ENCODE measurements at regions of chr7 and their contacts with region 1.

Region 1: GRCh38 chr7:111029574-111030251 is 61.2 kb upstream of the LRRN3 start:
- DNase-seq: peak in 7 of 9 donors; percentile 34 to 68 (median 57)
- ATAC-seq: no peak
- H3K4me3 ChIP-seq: no peak overlapping the region
- H3K4me3 Mint-ChIP-seq: peak overlapping the region in 9 of 10 donors; percentile 42 to 81 (median 63)
- H3K27ac ChIP-seq: peak overlapping the region; percentile 33
- H3K27ac Mint-ChIP-seq: peak overlapping the region; percentile 77 to 98 (median 89)
- H3K4me1 ChIP-seq: peaks cover 15 to 47% of the 10 kb centered on the region in 2 donors
- H3K4me1 Mint-ChIP-seq: peaks cover 31 to 69% (median 63%) of the 10 kb centered on the region in 7 donors
- H3K27me3 ChIP-seq: no peaks in the 10 kb centered on the region
- H3K27me3 Mint-ChIP-seq: peaks cover 0 to 2% (median 0%) of the 10 kb centered on the region in 5 donors

Region 2: GRCh38 chr7:110977127-110977737 is 52.5 kb before region 1 on chr7:
- CTCF ChIA-PET with region 1: no interaction called
- POLR2A ChIA-PET with region 1: interaction called, 3 read pairs
- intact Hi-C with region 1: loop called in 1 of 2 experiments (anchors 1 kb)
- DNase-seq: peak in 6 of 9 donors; percentile 17 to 53 (median 43)
- ATAC-seq: peak; percentile 57
- H3K4me3 ChIP-seq: no peak overlapping the region
- H3K4me3 Mint-ChIP-seq: peak overlapping the region; percentile 18 to 83 (median 71)
- H3K27ac ChIP-seq: peak overlapping the region; percentile 51
- H3K27ac Mint-ChIP-seq: peak overlapping the region; percentile 63 to 95 (median 82)
- H3K4me1 ChIP-seq: peaks cover 10 to 20% of the 10 kb centered on the region in 2 donors
- H3K4me1 Mint-ChIP-seq: peaks cover 10 to 76% (median 54%) of the 10 kb centered on the region in 7 donors
- H3K27me3 ChIP-seq: no peaks in the 10 kb centered on the region
- H3K27me3 Mint-ChIP-seq: no peaks in the 10 kb centered on the region

Region 3: GRCh38 chr7:111012799-111013675 is 16.7 kb before region 1 on chr7:
- CTCF ChIA-PET with region 1: interaction called, 7 read pairs
- POLR2A ChIA-PET with region 1: interaction called, 42 read pairs
- intact Hi-C with region 1: loop called (anchors 1 kb)
- DNase-seq: peak in 8 of 9 donors; percentile 44 to 76 (median 70)
- ATAC-seq: peak; percentile 86
- H3K4me3 ChIP-seq: peak overlapping the region; percentile 50
- H3K4me3 Mint-ChIP-seq: peak overlapping the region in 9 of 10 donors; percentile 59 to 83 (median 76)
- H3K27ac ChIP-seq: peak overlapping the region; percentile 82
- H3K27ac Mint-ChIP-seq: peak overlapping the region in 6 of 9 donors; percentile 84 to 96 (median 90)
- H3K4me1 ChIP-seq: peaks cover 13 to 77% of the 10 kb centered on the region in 2 donors
- H3K4me1 Mint-ChIP-seq: peaks cover 38 to 76% (median 48%) of the 10 kb centered on the region in 7 donors
- H3K27me3 ChIP-seq: no peaks in the 10 kb centered on the region
- H3K27me3 Mint-ChIP-seq: no peaks in the 10 kb centered on the region

Region 4: GRCh38 chr7:111043533-111043932 is 13.8 kb after region 1 on chr7:
- CTCF ChIA-PET with region 1: interaction called, 4 read pairs
- POLR2A ChIA-PET with region 1: interaction called, 11 read pairs
- intact Hi-C with region 1: loop called (anchors 1 to 2 kb)
- DNase-seq: no peak
- ATAC-seq: no peak
- H3K4me3 ChIP-seq: no peak overlapping the region
- H3K4me3 Mint-ChIP-seq: no peak overlapping the region
- H3K27ac ChIP-seq: no peak overlapping the region
- H3K27ac Mint-ChIP-seq: no peak overlapping the region
- H3K4me1 ChIP-seq: peaks cover 0 to 6% of the 10 kb centered on the region in 2 donors
- H3K4me1 Mint-ChIP-seq: peaks cover 4 to 30% (median 14%) of the 10 kb centered on the region in 7 donors
- H3K27me3 ChIP-seq: no peaks in the 10 kb centered on the region
- H3K27me3 Mint-ChIP-seq: no peaks in the 10 kb centered on the region

Region 5: GRCh38 chr7:111083413-111083812 is 53.7 kb after region 1 on chr7:
- CTCF ChIA-PET with region 1: interaction called, 5 read pairs
- POLR2A ChIA-PET with region 1: interaction called, 19 read pairs
- intact Hi-C with region 1: loop called (anchors 1 kb)
- DNase-seq: peak in 8 of 9 donors; percentile 52 to 90 (median 84)
- ATAC-seq: peak; percentile 99
- H3K4me3 ChIP-seq: peak overlapping the region; percentile 12
- H3K4me3 Mint-ChIP-seq: peak overlapping the region; percentile 37 to 80 (median 68)
- H3K27ac ChIP-seq: peak overlapping the region; percentile 70
- H3K27ac Mint-ChIP-seq: peak overlapping the region; percentile 74 to 93 (median 89)
- H3K4me1 ChIP-seq: peaks cover 30 to 49% of the 10 kb centered on the region in 2 donors
- H3K4me1 Mint-ChIP-seq: peaks cover 25 to 84% (median 74%) of the 10 kb centered on the region in 7 donors
- H3K27me3 ChIP-seq: no peaks in the 10 kb centered on the region
- H3K27me3 Mint-ChIP-seq: no peaks in the 10 kb centered on the region

Region 6: GRCh38 chr7:111183321-111183720 is 153.6 kb after region 1 on chr7:
- CTCF ChIA-PET with region 1: no interaction called
- POLR2A ChIA-PET with region 1: no interaction called
- intact Hi-C with region 1: no loop called
- DNase-seq: no peak
- ATAC-seq: no peak
- H3K4me3 ChIP-seq: no peak overlapping the region
- H3K4me3 Mint-ChIP-seq: no peak overlapping the region
- H3K27ac ChIP-seq: no peak overlapping the region
- H3K27ac Mint-ChIP-seq: no peak overlapping the region
- H3K4me1 ChIP-seq: no peaks in the 10 kb centered on the region
- H3K4me1 Mint-ChIP-seq: peaks cover 0 to 4% (median 0%) of the 10 kb centered on the region in 7 donors
- H3K27me3 ChIP-seq: no peaks in the 10 kb centered on the region
- H3K27me3 Mint-ChIP-seq: no peaks in the 10 kb centered on the region

Region 7: GRCh38 chr7:111561885-111562732 is 532.4 kb after region 1 on chr7 and contains the start of gene IMMP2L:
- CTCF ChIA-PET with region 1: no interaction called
- POLR2A ChIA-PET with region 1: no interaction called
- intact Hi-C with region 1: loop called in 1 of 2 experiments (anchors 5 kb)
- DNase-seq: peak; percentile 80 to 97 (median 90)
- ATAC-seq: peak; percentile 98
- H3K4me3 ChIP-seq: peak within 1 kb of the TSS; percentile 57
- H3K4me3 Mint-ChIP-seq: peak within 1 kb of the TSS; percentile 86 to 94 (median 92)
- H3K27ac ChIP-seq: peak within 1 kb of the TSS; percentile 94
- H3K27ac Mint-ChIP-seq: peak within 1 kb of the TSS; percentile 81 to 98 (median 95)
- H3K4me1 ChIP-seq: peaks cover 13 to 15% of the 10 kb centered on the region in 2 donors
- H3K4me1 Mint-ChIP-seq: peaks cover 25 to 58% (median 46%) of the 10 kb centered on the region in 7 donors
- H3K27me3 ChIP-seq: no peaks in the 10 kb centered on the region
- H3K27me3 Mint-ChIP-seq: peaks cover 2 to 12% (median 5%) of the 10 kb centered on the region in 5 donors
- total RNA-seq, gene IMMP2L: 9.7 to 20.8 (median 16.5) TPM

Region 8: GRCh38 chr7:111594602-111595001 is 564.9 kb after region 1 on chr7:
- CTCF ChIA-PET with region 1: no interaction called
- POLR2A ChIA-PET with region 1: no interaction called
- intact Hi-C with region 1: no loop called
- DNase-seq: no peak
- ATAC-seq: no peak
- H3K4me3 ChIP-seq: no peak overlapping the region
- H3K4me3 Mint-ChIP-seq: no peak overlapping the region
- H3K27ac ChIP-seq: no peak overlapping the region
- H3K27ac Mint-ChIP-seq: no peak overlapping the region
- H3K4me1 ChIP-seq: no peaks in the 10 kb centered on the region
- H3K4me1 Mint-ChIP-seq: no peaks in the 10 kb centered on the region
- H3K27me3 ChIP-seq: no peaks in the 10 kb centered on the region
- H3K27me3 Mint-ChIP-seq: peaks cover 0 to 11% (median 0%) of the 10 kb centered on the region in 5 donors